ENCODE measurements at regions of chr5 and their contacts with region 1.

Region 1: GRCh38 chr5:159987031-159987674 is 21.8 kb upstream of the TTC1 start:
- DNase-seq: peak; percentile 79
- ATAC-seq: peak; percentile 95
- H3K4me3 Mint-ChIP-seq: peak overlapping the region; percentile 27
- H3K27ac Mint-ChIP-seq: no peak overlapping the region
- H3K4me1 Mint-ChIP-seq: no peaks in the 10 kb centered on the region
- H3K27me3 Mint-ChIP-seq: peaks cover 74% of the 10 kb centered on the region

Region 2: DNA sequence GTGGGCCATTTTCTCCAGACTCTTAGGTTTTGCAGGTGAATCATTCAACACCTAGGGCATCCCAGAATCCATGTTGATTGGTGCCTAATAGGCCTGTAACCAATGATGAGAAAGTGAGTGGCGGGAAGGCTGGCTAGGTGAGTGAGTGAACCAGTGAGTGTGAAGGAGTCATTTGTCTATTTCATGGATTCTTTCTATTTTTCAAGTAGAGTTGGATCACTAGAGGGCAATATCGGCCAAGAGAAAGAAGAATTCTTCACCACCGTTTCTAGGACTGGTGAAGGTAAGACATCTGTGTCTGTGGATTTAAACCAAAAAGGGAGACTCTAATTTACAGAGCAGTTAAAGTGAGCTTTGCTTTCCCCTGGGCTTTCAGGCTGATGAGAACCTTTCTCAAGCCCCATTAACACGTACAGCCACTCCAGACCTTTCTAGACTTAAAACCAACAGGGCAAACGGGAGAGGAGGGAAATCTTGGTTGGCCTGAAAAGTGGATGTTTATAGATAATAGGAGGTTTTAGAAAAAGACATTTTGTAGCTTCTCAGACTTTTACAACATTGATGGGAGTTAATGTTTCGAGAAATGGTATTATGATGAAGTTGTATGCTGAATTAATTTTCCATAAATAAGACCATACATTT is 542.6 kb before region 1 on chr5:
- CTCF ChIA-PET with region 1: interaction called, 11 read pairs
- DNase-seq: no peak
- ATAC-seq: peak; percentile 12
- H3K4me3 Mint-ChIP-seq: no peak overlapping the region
- H3K27ac Mint-ChIP-seq: no peak overlapping the region
- H3K4me1 Mint-ChIP-seq: no peaks in the 10 kb centered on the region
- H3K27me3 Mint-ChIP-seq: peaks cover 58% of the 10 kb centered on the region

Region 3: DNA sequence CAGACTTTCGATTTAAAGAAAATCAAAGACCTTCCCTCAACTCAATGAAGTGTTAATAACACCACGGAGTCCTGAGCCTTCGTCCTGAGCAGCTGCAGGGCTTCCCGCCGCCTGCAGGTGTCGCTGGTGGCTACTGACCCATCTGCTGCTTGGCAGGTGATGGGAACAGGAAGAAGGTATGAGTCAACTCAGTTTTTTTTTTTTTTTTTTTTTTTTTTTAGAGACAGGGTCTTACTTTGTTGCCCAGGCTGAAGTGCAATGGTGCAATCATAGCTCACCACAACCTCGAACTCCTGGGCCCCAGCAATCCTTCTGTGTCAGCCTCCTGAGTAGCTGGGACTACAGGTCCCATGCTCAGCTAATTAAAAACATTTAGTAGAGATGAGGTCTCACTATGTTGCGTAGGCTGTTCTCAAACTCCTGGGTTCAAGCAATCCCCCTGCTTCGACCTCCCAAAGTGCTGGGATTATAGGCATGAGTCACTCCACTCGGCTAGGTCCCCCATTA is 471.2 kb before region 1 on chr5:
- CTCF ChIA-PET with region 1: interaction called, 16 read pairs
- DNase-seq: peak; percentile 80
- ATAC-seq: peak; percentile 90
- H3K4me3 Mint-ChIP-seq: no peak overlapping the region
- H3K27ac Mint-ChIP-seq: no peak overlapping the region
- H3K4me1 Mint-ChIP-seq: peaks cover 3% of the 10 kb centered on the region
- H3K27me3 Mint-ChIP-seq: peaks cover 22% of the 10 kb centered on the region